Motor neuron (in vitro differentiated cells): ENCODE measurements at regions of chr12 and their contacts with region 1.

Region 1: GRCh38 chr12:104381731-104382480 is 74.8 kb upstream of the CHST11 start:
- ATAC-seq: peak; percentile 82 to 99 (median 90)
- H3K4me3 ChIP-seq: peak overlapping the region in 1 of 5 donors; percentile 13
- H3K27ac ChIP-seq: no peak overlapping the region
- H3K4me1 ChIP-seq: no peaks in the 10 kb centered on the region

Region 2: DNA sequence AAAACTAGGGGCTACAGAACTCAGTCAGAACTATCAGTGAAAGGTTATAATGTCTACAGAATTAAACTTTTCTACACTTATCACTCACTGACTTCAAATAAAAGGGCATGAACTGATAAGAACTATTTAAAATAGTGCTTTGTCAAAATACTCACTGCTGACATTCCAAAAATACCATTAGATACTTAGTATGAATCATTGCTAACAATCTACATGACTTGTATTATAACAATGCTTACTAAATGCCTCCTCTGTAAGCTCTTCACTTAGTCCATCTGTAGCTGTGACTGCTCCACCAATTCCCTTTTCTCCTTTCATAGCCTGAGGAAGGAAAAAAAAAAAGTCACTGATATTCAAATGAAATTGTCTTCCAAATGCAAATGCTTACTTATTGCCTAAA is 260.9 kb before region 1 on chr12:
- in situ Hi-C with region 1: no loop called
- ATAC-seq: peak in 3 of 8 experiments; percentile 66 to 97 (median 96)
- H3K4me3 ChIP-seq: no peak overlapping the region
- H3K27ac ChIP-seq: no peak overlapping the region
- H3K4me1 ChIP-seq: no peaks in the 10 kb centered on the region

Region 3: DNA sequence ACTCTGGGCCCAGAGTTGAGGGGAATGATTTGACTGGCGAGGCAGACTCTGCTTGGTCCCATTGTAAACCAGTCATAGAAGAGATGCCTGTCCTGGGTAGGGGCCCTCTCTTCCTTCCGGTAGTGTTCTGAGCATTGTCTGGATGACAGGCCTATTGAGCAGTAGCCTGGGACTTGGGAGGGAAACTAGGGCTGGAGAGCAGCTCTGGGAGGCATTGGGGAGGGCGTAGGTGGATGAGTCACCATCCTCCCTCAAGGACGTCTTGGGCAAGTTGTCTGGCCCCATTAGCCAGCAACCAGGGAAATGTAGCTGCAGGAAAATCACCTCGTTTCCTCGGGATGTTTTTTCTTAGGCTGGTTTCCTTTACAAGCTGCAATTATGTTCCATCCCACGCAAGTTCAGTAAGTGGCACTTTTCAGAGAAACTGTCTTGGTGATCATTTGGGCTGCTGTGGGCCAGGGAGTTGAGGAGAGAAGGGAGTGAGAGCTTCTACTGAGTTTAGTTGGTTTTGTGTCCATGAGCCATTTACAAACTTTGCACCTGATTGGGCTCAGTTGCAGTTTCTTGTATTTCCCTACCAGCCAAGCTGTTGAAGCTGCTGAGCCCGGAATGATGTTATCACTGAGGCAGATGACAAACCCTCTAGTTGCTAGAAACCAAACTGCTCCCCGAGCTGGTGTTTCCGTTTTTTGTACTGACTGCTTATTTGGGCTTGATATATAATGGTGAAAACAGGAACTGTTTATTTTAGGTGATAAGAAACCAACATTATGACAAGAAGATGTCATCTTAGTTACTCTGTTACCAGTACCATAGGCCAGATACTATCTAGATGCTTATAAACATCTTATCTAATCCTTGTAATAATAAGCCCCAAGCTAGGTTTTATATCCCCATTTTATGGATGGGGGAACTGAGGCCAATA is 222.4 kb after region 1 on chr12:
- in situ Hi-C with region 1: no loop called
- ATAC-seq: peak; percentile 24 to 93 (median 76)
- H3K4me3 ChIP-seq: no peak overlapping the region
- H3K27ac ChIP-seq: no peak overlapping the region
- H3K4me1 ChIP-seq: peaks cover 26 to 43% of the 10 kb centered on the region in 2 donors

Region 4: DNA sequence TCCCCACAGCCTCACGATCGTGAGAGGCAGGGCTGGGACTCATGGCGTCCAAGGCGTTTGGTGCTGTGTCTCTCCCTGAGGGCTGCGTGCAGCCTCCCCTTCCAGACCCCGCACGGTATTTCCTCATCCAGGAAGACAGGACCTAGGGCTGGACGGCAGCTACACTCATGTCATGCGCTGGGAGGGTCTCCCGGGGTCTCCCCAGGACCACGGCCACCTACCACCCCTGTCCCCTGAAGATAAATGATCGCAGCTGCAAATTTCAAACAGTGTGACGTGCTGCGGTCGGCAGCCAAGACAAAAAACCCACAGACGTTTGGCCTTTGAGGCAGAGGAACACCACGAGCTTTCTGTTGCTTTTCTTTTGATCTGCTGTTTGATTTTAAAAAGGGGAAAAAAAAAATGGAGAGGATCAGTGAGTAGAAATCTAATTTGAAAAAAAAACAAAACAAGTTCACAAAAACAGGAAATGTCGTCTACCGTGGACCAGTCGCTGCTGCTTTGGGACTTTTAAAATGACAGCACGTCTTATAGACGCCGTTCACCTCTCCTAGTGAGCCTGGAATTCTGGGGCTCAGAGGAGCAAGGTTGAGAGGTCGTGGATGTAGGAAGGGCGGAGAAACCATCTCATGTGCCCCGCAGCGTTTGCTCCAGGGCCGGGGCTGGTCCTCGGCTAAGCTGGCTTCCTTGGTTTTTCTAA is 338.6 kb after region 1 on chr12:
- in situ Hi-C with region 1: loop called in 1 of 9 experiments (anchors 25 kb)
- ATAC-seq: peak in 5 of 8 experiments; percentile 36 to 60 (median 52)
- H3K4me3 ChIP-seq: peak overlapping the region in 2 of 5 donors; percentile 4 to 9
- H3K27ac ChIP-seq: peak overlapping the region; percentile 34 to 53
- H3K4me1 ChIP-seq: peaks cover 66 to 71% of the 10 kb centered on the region in 2 donors